ENCODE measurements at regions of chr2 and their contacts with region 1.

Region 1: DNA sequence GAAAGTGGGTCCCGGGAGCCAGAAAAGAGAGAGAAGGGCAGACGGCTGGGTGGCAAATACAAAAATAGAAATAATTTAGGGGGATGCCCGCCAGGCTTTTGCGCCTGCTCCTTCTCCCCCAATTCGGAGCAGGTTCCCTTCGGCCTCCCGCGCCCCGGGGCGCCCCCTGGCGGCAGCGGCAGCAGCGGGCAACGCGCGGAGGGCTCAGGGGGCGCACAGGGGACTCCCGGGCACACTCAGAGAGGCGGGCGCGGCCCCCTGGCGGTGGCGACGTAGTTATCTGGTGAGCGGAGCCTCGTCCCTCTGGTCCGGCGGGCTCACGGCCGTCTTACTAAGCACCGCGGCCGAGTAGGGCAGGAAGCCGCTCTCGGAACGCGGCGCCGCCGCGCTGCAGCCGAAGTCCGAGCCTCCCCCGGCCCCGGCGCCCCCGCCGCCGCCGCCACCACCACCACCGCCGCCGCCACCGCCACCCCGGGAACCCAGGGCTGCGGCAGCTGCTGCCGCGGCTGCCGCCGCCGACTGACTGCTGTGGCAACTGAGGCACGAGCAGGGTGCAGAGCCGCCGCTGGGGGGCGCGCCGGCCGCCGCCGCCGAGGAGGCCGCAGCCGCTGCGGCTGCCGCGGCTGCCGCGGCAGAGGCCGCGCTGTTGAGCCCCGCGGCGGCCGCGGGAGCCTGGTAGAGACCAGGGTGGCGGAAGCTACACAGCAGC is 3.8 kb downstream of the EVX2 start:
- DNase-seq: peak; percentile 82 to 85
- ATAC-seq: peak; percentile 91 to 97
- H3K4me3 ChIP-seq: peak overlapping the region; percentile 49
- H3K27ac ChIP-seq: peak overlapping the region; percentile 64 to 80; a peak in 5 of 6 replicates
- H3K4me1 ChIP-seq: peaks cover 9% of the 10 kb centered on the region; the same call in 2 of the 3 replicates
- CTCF ChIP-seq: peak; percentile 93
- EP300 ChIP-seq: no peak
- POLR2A ChIP-seq: no peak
- RAD21 ChIP-seq: peak; percentile 40 to 67; a peak in 4 of 5 replicates

Region 2: GRCh38 chr2:175690113-175690837 is 389.7 kb before region 1 on chr2:
- CTCF ChIA-PET with region 1: interaction called, 20 read pairs
- POLR2A ChIA-PET with region 1: no interaction called
- DNase-seq: peak in 1 of 2 experiments; percentile 67
- ATAC-seq: peak; percentile 82 to 90; a peak in 5 of 6 replicates
- H3K4me3 ChIP-seq: no peak overlapping the region
- H3K27ac ChIP-seq: no peak overlapping the region
- H3K4me1 ChIP-seq: no peaks in the 10 kb centered on the region
- CTCF ChIP-seq: peak; percentile 73
- EP300 ChIP-seq: no peak
- POLR2A ChIP-seq: no peak
- RAD21 ChIP-seq: peak; percentile 71 to 74

Region 3: GRCh38 chr2:176067589-176068418 is 12.2 kb before region 1 on chr2:
- CTCF ChIA-PET with region 1: interaction called, 18 read pairs
- POLR2A ChIA-PET with region 1: no interaction called
- DNase-seq: no peak
- ATAC-seq: no peak
- H3K4me3 ChIP-seq: no peak overlapping the region
- H3K27ac ChIP-seq: no peak overlapping the region
- H3K4me1 ChIP-seq: no peaks in the 10 kb centered on the region
- CTCF ChIP-seq: no peak
- EP300 ChIP-seq: no peak
- POLR2A ChIP-seq: no peak
- RAD21 ChIP-seq: no peak

Measured in A549 (cell line).